Psoas muscle (tissue), 8 donors: ENCODE measurements at regions of chr13 and their contacts with region 1.

Region 1: GRCh38 chr13:34993470-34993869 is 51.4 kb downstream of the NBEA start:
- DNase-seq: no peak
- ATAC-seq: no peak
- H3K4me3 ChIP-seq: no peak overlapping the region
- H3K27ac ChIP-seq: no peak overlapping the region
- H3K4me1 ChIP-seq: no peaks in the 10 kb centered on the region
- H3K27me3 ChIP-seq: no peaks in the 10 kb centered on the region
- CTCF ChIP-seq: no peak

Region 2: DNA sequence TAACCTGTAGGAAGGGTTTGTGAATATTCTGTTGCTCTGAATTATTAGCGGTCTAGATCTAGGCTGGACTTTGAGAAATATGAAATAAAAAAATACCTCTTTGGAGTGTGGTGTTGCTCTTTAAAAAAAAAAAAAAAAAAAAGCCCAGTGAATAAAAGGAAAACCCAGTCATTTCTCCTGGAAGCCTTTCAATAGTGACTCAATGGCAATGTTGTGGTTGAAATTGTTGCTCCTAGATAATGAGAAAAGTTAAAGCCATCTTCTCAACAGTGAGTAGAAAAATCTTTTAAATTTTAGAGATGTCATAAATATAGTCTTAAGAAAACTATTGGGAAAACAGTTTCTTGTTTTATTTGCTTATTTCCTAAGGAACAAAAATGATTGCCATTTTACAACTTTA is 1040.3 kb before region 1 on chr13:
- intact Hi-C with region 1: no loop called
- DNase-seq: no peak
- ATAC-seq: no peak
- H3K4me3 ChIP-seq: no peak overlapping the region
- H3K27ac ChIP-seq: no peak overlapping the region
- H3K4me1 ChIP-seq: no peaks in the 10 kb centered on the region
- H3K27me3 ChIP-seq: no peaks in the 10 kb centered on the region
- CTCF ChIP-seq: no peak

Region 3: GRCh38 chr13:34671137-34671536 is 322.3 kb before region 1 on chr13:
- intact Hi-C with region 1: no loop called
- DNase-seq: peak; percentile 10 to 45
- ATAC-seq: peak; percentile 81 to 95 (median 86)
- H3K4me3 ChIP-seq: no peak overlapping the region
- H3K27ac ChIP-seq: no peak overlapping the region
- H3K4me1 ChIP-seq: no peaks in the 10 kb centered on the region
- H3K27me3 ChIP-seq: no peaks in the 10 kb centered on the region
- CTCF ChIP-seq: no peak

Region 4: DNA sequence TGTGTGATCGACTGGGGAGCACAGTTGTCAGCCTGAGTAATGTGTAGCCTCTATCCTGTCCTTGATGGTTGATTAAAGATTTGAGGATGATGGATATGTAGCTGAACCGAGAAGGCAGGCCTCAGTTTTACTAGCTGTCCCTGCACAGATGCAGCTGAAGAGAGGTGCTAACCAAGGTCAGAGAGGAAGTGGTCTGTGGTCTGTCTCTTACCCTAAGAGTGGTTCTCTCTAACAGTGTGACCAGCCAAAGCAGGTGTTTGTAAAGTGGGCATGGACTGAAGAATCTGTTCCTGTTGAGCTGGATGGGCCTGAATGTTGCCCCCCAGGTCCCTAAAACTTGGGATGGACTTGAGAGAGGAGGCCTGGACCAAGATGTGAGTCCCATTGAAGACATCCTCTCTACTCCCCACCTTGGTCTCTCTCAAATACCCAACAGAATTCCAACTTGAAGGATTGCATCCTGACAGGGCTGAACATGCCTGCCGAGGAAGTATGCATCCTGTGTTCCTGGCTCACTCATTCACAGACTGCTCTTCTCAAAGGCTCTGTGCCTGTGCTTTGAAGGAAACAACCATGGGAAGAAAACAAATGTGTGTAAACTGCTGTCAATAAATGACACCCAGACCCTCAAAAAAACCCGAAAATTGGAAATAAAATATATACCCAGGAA is 259.2 kb after region 1 on chr13:
- intact Hi-C with region 1: loop called in 1 of 2 experiments (anchors 5 kb)
- DNase-seq: no peak
- ATAC-seq: no peak
- H3K4me3 ChIP-seq: no peak overlapping the region
- H3K27ac ChIP-seq: no peak overlapping the region
- H3K4me1 ChIP-seq: no peaks in the 10 kb centered on the region
- H3K27me3 ChIP-seq: no peaks in the 10 kb centered on the region
- CTCF ChIP-seq: no peak